Activated naive CD4-positive, alpha-beta T cell treated with anti-CD3 and anti-CD28 coated beads for 36 hours (primary cell): ENCODE measurements at regions of chr9 and their contacts with region 1.

Region 1: DNA sequence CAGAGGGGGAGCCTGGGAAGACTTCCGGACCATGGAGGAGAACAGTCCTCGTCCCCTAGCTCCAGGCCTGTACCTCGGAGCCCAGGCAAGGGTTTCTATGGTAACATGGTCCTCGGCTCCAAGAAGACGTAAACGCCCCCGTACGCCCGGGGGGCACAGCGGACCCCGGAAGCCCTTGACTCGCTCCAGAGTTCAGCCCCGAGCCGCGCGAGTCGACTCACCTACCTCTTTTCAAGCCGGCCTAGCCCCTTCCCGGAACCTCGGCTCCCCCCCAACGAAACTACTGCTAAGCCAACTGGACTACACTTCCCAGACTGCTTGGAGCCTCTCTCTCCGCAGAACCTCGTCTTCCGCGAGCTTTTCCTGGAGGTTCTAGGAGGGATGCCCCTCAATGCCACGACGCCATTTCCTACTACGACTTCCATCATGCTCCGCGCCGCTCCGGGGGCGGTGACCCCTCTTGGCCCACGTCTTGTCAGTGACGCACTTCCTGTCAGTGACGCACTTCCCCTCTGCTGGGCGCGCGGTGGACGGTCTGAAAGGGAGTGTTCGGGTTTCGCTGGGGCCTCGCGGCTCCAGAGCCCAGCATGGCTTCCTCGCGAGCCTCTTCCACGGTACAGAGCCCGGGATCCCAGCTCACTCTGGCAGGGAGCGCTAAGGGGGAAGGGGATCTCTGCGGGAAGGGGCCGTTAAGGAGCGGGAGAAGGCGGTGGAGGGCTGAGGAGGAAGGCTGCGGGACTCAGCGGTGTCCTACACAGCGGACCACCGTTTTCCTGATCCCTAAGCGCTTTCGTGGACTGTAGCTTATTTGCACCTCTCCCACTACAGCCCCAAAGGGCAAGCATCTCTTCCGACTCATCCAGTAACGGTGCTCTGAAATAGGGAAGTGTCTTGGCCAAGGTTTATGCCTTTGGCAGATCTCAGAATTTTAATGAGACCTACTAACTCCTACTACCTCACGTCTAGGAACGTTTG is at the starts of genes CDC26 and PRPF4:
- DNase-seq: peak; percentile 96
- H3K4me3 Mint-ChIP-seq: no peak within 1 kb of the TSS
- H3K27ac Mint-ChIP-seq: no peak within 1 kb of the TSS
- H3K4me1 Mint-ChIP-seq: peaks cover 31% of the 10 kb centered on the region
- H3K27me3 Mint-ChIP-seq: no peaks in the 10 kb centered on the region
- total RNA-seq, gene CDC26: 36.3 to 38.1 TPM
- total RNA-seq, gene PRPF4: 39.9 to 44.3 TPM

Region 2: DNA sequence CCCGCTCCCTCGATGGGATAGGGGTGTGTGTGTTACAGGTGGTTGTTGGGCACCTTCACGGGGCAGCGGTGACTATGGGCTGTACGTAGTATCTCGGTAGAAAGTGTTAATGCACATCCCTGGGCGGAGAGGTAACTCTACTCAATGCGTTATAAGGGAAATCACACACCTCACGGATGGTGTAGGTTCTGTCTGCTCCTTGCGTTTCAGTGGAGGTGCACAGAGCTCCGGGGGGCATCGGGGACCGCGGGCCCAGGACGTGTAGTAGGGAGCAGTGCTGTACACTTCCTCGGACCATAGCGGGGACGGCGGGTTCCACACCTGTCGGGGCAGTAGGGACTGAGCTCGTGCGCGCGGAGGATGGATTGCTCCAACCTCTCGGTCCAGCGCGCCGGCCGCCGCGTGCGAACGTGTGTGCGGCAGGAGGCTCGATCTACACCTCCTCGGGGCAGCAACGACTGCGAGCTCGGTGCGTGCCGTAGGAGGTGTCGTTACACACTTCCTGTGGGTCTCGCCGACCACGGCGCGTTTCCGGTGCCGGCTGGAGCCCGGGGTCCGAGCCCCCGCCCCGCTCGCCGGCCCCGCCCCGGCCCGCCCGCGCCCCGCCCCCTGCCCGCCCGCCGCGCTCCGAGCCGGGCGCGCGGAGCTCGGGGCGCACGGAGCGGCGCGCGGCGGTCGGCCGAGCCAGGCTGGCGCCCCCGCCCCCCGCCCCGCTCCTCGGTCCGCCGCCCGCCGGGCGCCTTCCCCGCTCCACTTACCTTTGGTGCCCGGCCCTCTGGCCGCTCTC is 789.0 kb before region 1 on chr9 and contains the start of gene KIAA1958:
- CTCF ChIA-PET with region 1: no interaction called
- intact Hi-C with region 1: loop called (anchors 5 kb)
- DNase-seq: peak; percentile 91
- H3K4me3 Mint-ChIP-seq: peak within 1 kb of the TSS; percentile 93
- H3K27ac Mint-ChIP-seq: peak within 1 kb of the TSS; percentile 88
- H3K4me1 Mint-ChIP-seq: peaks cover 34% of the 10 kb centered on the region
- H3K27me3 Mint-ChIP-seq: no peaks in the 10 kb centered on the region
- total RNA-seq, gene KIAA1958: 6.7 to 7.6 TPM

Region 3: DNA sequence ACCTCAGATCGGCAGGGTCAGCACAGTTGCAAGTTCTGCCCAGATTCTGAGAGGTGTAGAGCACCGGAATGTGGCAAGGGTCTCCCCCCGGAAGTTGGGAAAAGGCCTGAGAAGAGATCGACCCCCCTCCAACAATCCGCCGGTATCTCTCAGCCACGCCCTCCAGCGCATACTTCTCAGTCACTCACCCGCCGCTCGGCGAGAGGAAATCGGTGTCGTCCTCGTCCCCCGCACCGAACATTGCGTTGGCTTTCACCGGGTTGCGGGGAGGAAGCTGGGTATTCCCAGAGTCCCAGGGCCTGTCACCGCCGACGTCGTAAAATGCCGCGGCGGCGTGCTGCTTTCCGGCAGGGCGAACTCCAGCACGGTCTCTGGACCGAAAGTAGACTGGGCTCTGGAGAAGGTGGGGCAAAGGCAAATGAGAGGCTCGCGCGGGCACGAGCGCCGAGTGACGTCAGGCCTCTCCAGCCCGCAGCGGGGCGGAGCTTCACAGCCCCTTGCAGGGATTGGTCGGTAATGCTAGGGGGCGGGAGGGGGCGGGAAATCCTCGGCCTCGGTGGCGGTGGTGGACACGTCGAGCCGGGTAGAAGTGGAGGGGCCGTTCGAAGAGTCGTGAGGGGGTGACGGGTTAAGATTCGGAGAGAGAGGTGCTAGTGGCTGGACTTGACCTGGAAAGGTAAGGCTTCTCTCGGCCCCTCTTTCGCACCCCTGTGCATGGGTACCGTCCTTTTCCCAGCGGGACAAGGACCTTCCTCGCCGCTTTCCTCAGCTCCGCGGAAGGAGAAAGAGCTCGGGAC is 54.2 kb before region 1 on chr9 and contains the starts of genes FKBP15 and SLC31A1:
- CTCF ChIA-PET with region 1: interaction called, 21 read pairs
- intact Hi-C with region 1: loop called (anchors 1 kb)
- DNase-seq: peak; percentile 98
- H3K4me3 Mint-ChIP-seq: peak within 1 kb of the TSS; percentile 95
- H3K27ac Mint-ChIP-seq: peak within 1 kb of the TSS; percentile 91
- H3K4me1 Mint-ChIP-seq: peaks cover 38% of the 10 kb centered on the region
- H3K27me3 Mint-ChIP-seq: no peaks in the 10 kb centered on the region
- total RNA-seq, gene FKBP15: 14.7 to 15.8 TPM
- total RNA-seq, gene SLC31A1: 8.1 to 8.2 TPM

Region 4: DNA sequence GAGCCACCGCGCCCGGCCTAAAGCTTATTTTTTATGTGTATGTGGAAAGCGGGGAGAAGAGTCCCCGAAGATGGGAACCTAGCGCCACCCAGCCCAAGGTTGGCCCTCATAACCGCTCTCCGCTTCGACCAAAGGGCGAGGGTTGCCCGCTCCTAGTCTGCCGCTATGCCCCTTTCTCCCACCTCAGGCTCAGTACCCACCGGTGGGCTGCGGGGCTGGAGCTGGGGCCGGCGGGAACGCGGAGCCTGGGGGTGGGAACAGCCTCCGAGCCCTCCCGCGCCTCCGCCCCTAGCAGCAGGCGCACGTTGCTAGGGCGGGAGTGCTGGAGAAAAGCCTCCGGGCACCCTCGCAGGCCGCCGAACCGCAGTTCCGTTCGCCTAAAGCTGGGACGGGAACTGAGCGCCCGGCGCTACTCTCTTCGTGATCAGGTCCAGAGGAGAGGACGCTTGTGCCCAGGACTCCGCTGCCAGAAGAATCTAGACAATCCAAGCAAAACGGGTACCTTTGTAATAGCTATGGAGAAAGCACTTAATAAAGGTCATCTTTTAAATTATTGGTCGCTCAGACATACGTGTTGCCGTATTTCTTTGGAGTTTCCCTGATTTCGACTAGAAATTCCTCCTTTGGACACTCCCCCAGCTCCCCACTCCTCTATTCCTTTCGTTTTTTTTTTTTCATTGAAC is 64.7 kb after region 1 on chr9 and contains the start of gene WDR31:
- CTCF ChIA-PET with region 1: interaction called, 7 read pairs
- intact Hi-C with region 1: loop called (anchors 1 kb)
- DNase-seq: peak; percentile 85
- H3K4me3 Mint-ChIP-seq: peak within 1 kb of the TSS; percentile 84
- H3K27ac Mint-ChIP-seq: peak within 1 kb of the TSS; percentile 55
- H3K4me1 Mint-ChIP-seq: peaks cover 35% of the 10 kb centered on the region
- H3K27me3 Mint-ChIP-seq: peaks cover 4% of the 10 kb centered on the region
- total RNA-seq, gene WDR31: 0.81 to 0.88 TPM

Region 5: DNA sequence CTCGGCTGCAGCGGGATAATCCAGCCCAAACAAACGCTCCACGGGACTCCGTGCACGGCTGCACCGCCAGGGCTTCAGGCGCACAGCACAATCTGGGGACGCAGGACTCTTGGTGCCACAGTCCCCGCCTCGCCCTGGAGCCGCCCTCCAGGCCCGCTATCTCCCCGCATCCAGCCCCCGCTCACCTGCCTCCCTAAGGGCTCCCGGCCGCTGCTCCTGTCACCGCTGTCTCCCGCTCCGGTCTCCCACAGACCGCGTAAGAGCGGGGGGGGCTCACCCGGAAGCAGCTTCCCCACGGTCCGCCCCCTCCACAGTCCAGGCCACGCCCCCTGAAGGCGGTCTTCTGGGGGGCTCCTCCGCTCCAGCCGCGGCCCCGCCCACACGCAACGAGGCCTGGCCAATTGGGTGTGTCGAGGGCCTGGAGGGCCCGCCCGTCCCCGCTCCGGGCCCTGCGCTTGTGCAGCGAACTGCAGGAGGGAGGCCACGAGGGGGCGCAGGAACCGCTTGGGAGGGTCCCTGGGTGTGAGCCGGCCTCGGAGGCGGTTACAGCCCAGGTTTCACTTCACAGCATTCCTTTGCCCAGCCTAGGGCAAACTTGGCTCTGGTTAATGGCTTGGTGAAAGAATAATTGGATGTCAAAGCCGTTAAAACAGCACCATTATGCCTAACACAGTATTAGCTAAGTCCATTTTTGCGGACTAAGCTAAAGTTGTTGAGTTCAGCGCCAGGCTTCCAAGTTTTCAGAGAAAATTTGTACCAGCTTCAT is 125.8 kb after region 1 on chr9 and contains the start of gene ALAD:
- CTCF ChIA-PET with region 1: interaction called, 58 read pairs
- intact Hi-C with region 1: loop called (anchors 2 kb)
- DNase-seq: peak; percentile 99
- H3K4me3 Mint-ChIP-seq: peak within 1 kb of the TSS; percentile 93
- H3K27ac Mint-ChIP-seq: no peak within 1 kb of the TSS
- H3K4me1 Mint-ChIP-seq: peaks cover 20% of the 10 kb centered on the region
- H3K27me3 Mint-ChIP-seq: no peaks in the 10 kb centered on the region
- total RNA-seq, gene ALAD: 16.1 to 17.7 TPM

Region 6: DNA sequence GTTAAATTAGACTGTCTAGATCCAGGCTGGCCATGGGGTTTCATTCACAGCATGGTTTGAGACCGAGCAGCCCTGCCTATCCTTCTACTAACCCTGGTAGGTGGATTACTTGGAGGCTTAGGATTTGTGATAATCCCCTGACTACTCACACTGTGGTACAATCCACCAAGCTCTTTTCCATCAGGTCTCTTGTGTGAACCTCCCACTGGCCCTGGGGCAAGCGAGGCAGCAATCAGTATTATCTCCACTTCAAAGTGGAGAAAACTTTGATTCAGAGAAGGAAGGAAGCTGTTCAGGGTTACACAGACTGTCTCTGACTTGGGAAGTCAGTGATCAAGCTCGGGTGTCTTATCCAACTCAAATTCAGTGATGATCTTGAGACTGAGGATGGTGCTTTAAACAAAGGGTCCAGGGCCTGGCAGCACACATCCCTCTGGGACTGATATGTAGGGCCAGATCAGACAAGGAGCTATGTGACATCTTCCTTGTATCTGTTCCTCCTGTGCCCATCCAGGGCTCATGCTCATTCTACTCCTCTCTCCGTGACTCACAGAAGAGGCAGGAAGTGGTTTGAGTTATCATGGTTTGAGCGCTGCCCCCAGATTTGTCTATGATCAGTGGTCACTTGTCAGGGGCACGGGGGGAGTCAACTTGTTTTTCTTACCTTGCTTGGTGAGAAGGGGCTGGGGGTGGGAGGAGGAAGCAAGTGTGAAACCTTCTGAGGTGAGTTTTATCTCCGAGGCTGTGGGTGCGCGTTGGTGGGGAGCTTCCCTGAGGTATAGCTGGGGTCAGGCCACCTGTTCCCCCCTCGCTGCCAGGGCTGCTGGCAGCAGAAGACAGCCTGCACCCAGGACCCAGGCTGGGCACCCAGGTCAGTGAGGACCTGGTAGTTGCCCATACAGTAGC is 236.7 kb after region 1 on chr9:
- CTCF ChIA-PET with region 1: no interaction called
- intact Hi-C with region 1: loop called (anchors 2 kb)
- DNase-seq: peak; percentile 82
- H3K4me3 Mint-ChIP-seq: peak overlapping the region; percentile 41
- H3K27ac Mint-ChIP-seq: peak overlapping the region; percentile 85
- H3K4me1 Mint-ChIP-seq: peaks cover 50% of the 10 kb centered on the region
- H3K27me3 Mint-ChIP-seq: peaks cover 2% of the 10 kb centered on the region

Region 7: GRCh38 chr9:114385412-114386181 is 1110.2 kb after region 1 on chr9:
- CTCF ChIA-PET with region 1: no interaction called
- intact Hi-C with region 1: loop called (anchors 10 kb)
- DNase-seq: peak; percentile 97
- H3K4me3 Mint-ChIP-seq: peak overlapping the region; percentile 97
- H3K27ac Mint-ChIP-seq: peak overlapping the region; percentile 100
- H3K4me1 Mint-ChIP-seq: peaks cover 67% of the 10 kb centered on the region
- H3K27me3 Mint-ChIP-seq: no peaks in the 10 kb centered on the region